T-cell (primary cell): ENCODE measurements at regions of chr6 and their contacts with region 1.

Region 1: DNA sequence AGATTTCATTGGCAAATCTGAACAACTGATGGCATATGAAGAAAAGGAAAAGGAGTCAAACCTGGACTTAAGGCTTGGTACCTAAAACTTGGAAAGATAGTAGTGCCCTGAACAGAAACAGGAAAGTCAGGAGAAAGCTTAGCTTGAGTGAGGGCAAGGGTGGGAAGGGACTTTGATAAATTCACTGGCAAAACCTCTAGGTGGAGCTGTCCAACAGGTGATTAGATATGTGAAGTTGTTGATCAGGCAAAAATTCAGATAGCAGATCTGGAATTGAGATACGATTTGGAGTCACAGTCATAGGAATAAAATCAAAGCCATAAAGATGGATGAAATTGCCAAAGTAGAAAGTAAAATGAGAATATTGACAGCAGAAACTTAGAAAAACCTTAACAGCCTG is 16.1 kb upstream of the ZNF292 start:
- DNase-seq: peak in 25 of 35 experiments; percentile 9 to 82 (median 28)
- ATAC-seq: peak; percentile 68 to 81 (median 70)
- H3K4me3 ChIP-seq: no peak overlapping the region
- H3K4me3 Mint-ChIP-seq: no peak overlapping the region
- H3K27ac ChIP-seq: no peak overlapping the region
- H3K27ac Mint-ChIP-seq: no peak overlapping the region
- H3K4me1 ChIP-seq: peaks cover 0 to 4% of the 10 kb centered on the region in 2 experiments
- H3K4me1 Mint-ChIP-seq: peaks cover 0 to 2% (median 2%) of the 10 kb centered on the region in 3 donors
- H3K27me3 ChIP-seq: peaks cover 0 to 8% of the 10 kb centered on the region in 2 experiments
- H3K27me3 Mint-ChIP-seq: peaks cover 0 to 5% of the 10 kb centered on the region in 2 donors

Region 2: DNA sequence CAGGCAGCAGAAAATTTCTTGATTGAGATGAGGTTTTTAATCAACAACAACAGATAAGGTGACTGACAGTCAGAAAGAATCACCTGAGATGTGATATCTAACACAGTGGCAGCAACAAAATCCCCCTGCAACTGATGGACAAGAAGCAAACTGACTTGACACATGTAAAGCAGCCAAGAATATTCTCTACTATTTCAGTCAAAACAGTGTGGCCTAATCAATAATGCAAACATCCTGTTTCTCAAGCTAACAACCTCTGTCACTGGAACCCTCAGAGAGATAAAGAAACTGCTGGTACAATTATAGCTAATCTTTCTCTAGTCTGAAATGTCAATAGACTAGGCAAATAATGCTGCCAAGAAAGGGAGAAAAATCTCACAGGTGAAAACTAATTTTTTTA is 39.8 kb before region 1 on chr6:
- CTCF ChIA-PET with region 1: no interaction called
- POLR2A ChIA-PET with region 1: no interaction called
- DNase-seq: no peak
- ATAC-seq: no peak
- H3K4me3 ChIP-seq: no peak overlapping the region
- H3K4me3 Mint-ChIP-seq: no peak overlapping the region
- H3K27ac ChIP-seq: no peak overlapping the region
- H3K27ac Mint-ChIP-seq: no peak overlapping the region
- H3K4me1 ChIP-seq: no peaks in the 10 kb centered on the region
- H3K4me1 Mint-ChIP-seq: no peaks in the 10 kb centered on the region
- H3K27me3 ChIP-seq: peaks cover 0 to 4% of the 10 kb centered on the region in 2 experiments
- H3K27me3 Mint-ChIP-seq: peaks cover 6 to 18% of the 10 kb centered on the region in 2 donors

Region 3: DNA sequence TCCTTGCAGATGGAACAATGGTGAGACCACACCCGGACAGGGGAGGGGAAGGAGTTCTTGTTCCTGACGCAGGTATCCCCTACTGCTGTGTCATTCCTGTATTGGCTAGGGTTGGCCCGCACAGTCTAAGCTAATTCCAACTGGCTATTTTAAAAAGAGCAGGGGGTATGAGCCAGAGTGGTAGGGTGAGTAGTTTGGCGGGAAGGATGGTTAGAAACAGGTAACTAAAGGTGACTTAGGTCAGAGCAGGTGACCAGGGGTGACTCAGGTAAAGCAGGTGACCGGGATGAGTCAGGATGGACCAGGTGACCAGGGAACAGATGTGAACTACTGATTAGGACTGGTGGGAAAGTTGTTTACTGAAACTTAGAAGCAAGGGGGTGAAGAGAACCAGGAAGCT is 74.1 kb after region 1 on chr6:
- CTCF ChIA-PET with region 1: interaction called, 3 to 10 read pairs
- POLR2A ChIA-PET with region 1: no interaction called
- DNase-seq: no peak
- ATAC-seq: no peak
- H3K4me3 ChIP-seq: no peak overlapping the region
- H3K4me3 Mint-ChIP-seq: no peak overlapping the region
- H3K27ac ChIP-seq: no peak overlapping the region
- H3K27ac Mint-ChIP-seq: peak overlapping the region; percentile 54 to 62
- H3K4me1 ChIP-seq: peaks cover 3 to 5% of the 10 kb centered on the region in 2 experiments
- H3K4me1 Mint-ChIP-seq: peaks cover 56 to 58% (median 58%) of the 10 kb centered on the region in 3 donors
- H3K27me3 ChIP-seq: no peaks in the 10 kb centered on the region
- H3K27me3 Mint-ChIP-seq: no peaks in the 10 kb centered on the region

Region 4: GRCh38 chr6:87237804-87238203 is 98.6 kb after region 1 on chr6:
- CTCF ChIA-PET with region 1: interaction called, 10 read pairs
- POLR2A ChIA-PET with region 1: no interaction called
- DNase-seq: peak in 1 of 35 experiments; percentile 54
- ATAC-seq: peak in 1 of 4 experiments; percentile 52
- H3K4me3 ChIP-seq: no peak overlapping the region
- H3K4me3 Mint-ChIP-seq: no peak overlapping the region
- H3K27ac ChIP-seq: no peak overlapping the region
- H3K27ac Mint-ChIP-seq: no peak overlapping the region
- H3K4me1 ChIP-seq: no peaks in the 10 kb centered on the region
- H3K4me1 Mint-ChIP-seq: peaks cover 0 to 2% (median 0%) of the 10 kb centered on the region in 3 donors
- H3K27me3 ChIP-seq: no peaks in the 10 kb centered on the region
- H3K27me3 Mint-ChIP-seq: no peaks in the 10 kb centered on the region